Endothelial cell of umbilical vein (primary cell): ENCODE measurements at regions of chr11 and their contacts with region 1.

Region 1: GRCh38 chr11:100575870-100576705 is 111.0 kb upstream of the ARHGAP42 start:
- DNase-seq: peak; percentile 56
- H3K4me3 ChIP-seq: no peak overlapping the region
- H3K27ac ChIP-seq: no peak overlapping the region
- H3K4me1 ChIP-seq: no peaks in the 10 kb centered on the region
- H3K27me3 ChIP-seq: peaks cover 0 to 11% of the 10 kb centered on the region in 2 experiments
- CTCF ChIP-seq: peak; percentile 37 to 59
- POLR2A ChIP-seq: no peak

Region 2: DNA sequence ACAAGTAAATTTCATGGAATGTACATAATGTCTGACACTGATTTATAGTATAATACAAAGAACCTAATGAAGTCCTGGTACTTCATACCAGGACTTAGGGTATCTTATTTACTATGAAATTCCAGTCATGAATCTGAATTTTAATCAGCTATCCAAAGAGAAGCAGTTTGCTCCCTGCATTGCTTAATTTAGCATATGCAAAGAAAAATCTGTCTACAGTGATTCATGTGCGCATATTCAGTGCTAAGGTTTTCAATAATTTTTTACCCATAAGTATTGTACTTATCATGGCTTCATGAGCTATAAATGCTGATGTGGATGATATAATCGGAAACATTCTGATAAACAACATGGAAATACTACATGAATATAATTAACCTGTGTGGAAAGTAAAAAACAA is 74.6 kb before region 1 on chr11:
- CTCF ChIA-PET with region 1: no interaction called
- POLR2A ChIA-PET with region 1: no interaction called
- dilution Hi-C with region 1: no loop called
- intact Hi-C with region 1: no loop called
- DNase-seq: no peak
- H3K4me3 ChIP-seq: no peak overlapping the region
- H3K27ac ChIP-seq: no peak overlapping the region
- H3K4me1 ChIP-seq: no peaks in the 10 kb centered on the region
- H3K27me3 ChIP-seq: no peaks in the 10 kb centered on the region
- CTCF ChIP-seq: no peak
- POLR2A ChIP-seq: no peak

Region 3: DNA sequence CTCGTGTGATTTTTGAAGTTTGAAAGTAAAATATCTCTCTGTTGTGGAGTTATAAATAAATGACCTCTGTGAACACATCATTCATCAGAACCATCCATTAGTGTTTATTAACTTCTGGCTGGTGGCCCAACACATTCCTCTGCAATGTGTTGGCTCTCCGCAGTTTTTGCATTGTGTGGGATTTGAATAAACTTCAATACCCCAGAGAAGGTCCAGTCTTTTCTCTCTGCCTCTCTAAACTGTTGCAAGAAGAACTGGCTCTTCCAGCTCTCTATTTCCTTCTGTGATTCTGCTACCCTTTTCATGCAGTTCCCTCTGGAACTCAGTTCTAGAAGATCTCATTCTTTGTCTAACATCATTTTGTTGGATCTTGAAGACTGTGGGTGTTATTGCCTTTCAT is 14.0 kb before region 1 on chr11:
- CTCF ChIA-PET with region 1: interaction called, 12 read pairs
- POLR2A ChIA-PET with region 1: no interaction called
- dilution Hi-C with region 1: no loop called
- intact Hi-C with region 1: no loop called
- DNase-seq: peak; percentile 93
- H3K4me3 ChIP-seq: no peak overlapping the region
- H3K27ac ChIP-seq: peak overlapping the region; percentile 68
- H3K4me1 ChIP-seq: peaks cover 32% of the 10 kb centered on the region
- H3K27me3 ChIP-seq: no peaks in the 10 kb centered on the region
- CTCF ChIP-seq: no peak
- POLR2A ChIP-seq: no peak

Region 4: DNA sequence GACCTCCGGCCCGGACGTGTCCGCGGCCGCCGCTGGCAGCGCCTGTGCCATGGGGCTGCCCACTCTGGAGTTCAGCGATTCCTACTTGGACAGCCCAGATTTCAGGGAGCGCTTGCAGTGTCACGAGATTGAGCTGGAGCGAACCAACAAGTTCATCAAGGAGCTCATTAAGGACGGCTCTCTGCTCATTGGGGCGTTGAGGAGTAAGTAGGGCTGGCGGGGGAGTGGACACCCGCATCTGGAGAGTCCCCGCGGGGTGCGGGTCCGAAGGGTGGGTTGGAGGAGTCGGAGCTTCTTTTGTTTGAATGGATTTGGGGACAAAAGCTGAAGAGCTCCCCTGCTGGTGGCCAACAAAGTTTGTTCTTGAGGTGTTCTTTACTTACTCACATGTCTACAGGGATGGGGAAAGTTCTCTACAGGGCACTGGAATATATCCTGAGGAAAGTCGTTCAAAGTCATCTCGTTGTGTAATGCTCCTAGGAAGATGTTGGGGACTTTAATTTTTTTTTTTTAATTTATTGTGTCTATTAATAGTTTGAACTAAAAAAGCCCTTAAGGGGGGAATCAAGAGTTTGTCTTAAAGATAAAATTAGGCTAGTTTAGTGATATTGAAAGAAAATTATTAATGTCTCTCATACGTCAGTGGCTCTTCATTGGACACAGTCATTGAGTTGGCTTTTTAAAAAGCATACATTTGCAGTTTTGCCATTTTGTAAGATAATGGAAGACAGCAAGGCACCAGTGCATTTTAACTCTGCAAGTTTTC is 111.7 kb after region 1 on chr11:
- CTCF ChIA-PET with region 1: interaction called, 74 read pairs
- POLR2A ChIA-PET with region 1: no interaction called
- dilution Hi-C with region 1: no loop called
- intact Hi-C with region 1: loop called (anchors 1 kb)
- DNase-seq: peak; percentile 85
- H3K4me3 ChIP-seq: peak overlapping the region; percentile 84 to 90 (median 89)
- H3K27ac ChIP-seq: peak overlapping the region; percentile 63
- H3K4me1 ChIP-seq: peaks cover 6% of the 10 kb centered on the region
- H3K27me3 ChIP-seq: no peaks in the 10 kb centered on the region
- CTCF ChIP-seq: peak; percentile 60 to 73
- POLR2A ChIP-seq: no peak

Region 5: GRCh38 chr11:100855466-100856067 is 279.5 kb after region 1 on chr11:
- CTCF ChIA-PET with region 1: interaction called, 43 read pairs
- POLR2A ChIA-PET with region 1: no interaction called
- dilution Hi-C with region 1: no loop called
- intact Hi-C with region 1: loop called (anchors 1 kb)
- DNase-seq: peak; percentile 61
- H3K4me3 ChIP-seq: no peak overlapping the region
- H3K27ac ChIP-seq: no peak overlapping the region
- H3K4me1 ChIP-seq: no peaks in the 10 kb centered on the region
- H3K27me3 ChIP-seq: no peaks in the 10 kb centered on the region
- CTCF ChIP-seq: peak; percentile 36 to 41
- POLR2A ChIP-seq: no peak